Dendritic cell treated with granulocyte-macrophage colony-stimulating factor and Interleukin-4, amounts not matched to agents 40 ng/mL and 50 ng/mL, for 4 days (primary cell): ENCODE measurements at regions of chr2 and their contacts with region 1.

Region 1: GRCh38 chr2:231557571-231558237 is 27.5 kb upstream of the NMUR1 start:
- H3K4me3 Mint-ChIP-seq: no peak overlapping the region
- H3K27ac Mint-ChIP-seq: no peak overlapping the region
- H3K4me1 Mint-ChIP-seq: peaks cover 34% of the 10 kb centered on the region
- H3K27me3 Mint-ChIP-seq: peaks cover 53% of the 10 kb centered on the region

Region 2: DNA sequence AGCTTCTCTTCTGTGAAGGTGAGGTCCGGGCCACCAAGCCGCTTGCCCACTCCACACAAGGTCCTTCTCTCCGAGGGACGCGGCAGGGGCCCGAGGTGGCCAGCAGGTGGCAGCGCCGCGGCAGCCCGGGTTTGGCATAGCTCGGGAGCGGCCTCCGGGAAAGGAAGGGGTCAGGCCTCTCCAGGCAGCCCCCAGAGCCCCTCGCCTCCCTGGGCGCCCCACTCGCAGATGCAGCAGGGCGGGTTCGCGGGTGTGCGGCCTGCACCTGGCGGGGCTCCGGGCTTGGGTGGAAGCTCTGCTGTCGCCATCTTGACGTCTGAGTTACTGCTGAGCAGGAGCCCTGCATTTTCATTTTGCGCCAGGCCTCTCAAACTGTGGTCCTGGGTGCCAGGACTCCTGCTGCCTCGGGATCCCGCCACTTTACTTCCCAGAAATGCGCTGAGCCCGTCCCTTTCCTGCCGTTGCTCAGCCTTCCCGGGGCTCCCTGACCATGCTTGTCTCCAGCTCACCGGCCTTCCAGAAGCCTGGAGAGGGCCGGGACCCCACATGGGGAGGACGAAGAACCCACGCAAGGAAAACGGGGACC is 74.8 kb before region 1 on chr2:
- intact Hi-C with region 1: loop called (anchors 1 kb)
- H3K4me3 Mint-ChIP-seq: peak overlapping the region; percentile 86
- H3K27ac Mint-ChIP-seq: peak overlapping the region; percentile 82
- H3K4me1 Mint-ChIP-seq: peaks cover 22% of the 10 kb centered on the region
- H3K27me3 Mint-ChIP-seq: peaks cover 9% of the 10 kb centered on the region

Region 3: GRCh38 chr2:231514103-231514950 is 43.4 kb before region 1 on chr2:
- intact Hi-C with region 1: loop called (anchors 1 kb)
- H3K4me3 Mint-ChIP-seq: peak overlapping the region; percentile 92
- H3K27ac Mint-ChIP-seq: peak overlapping the region; percentile 88
- H3K4me1 Mint-ChIP-seq: peaks cover 12% of the 10 kb centered on the region
- H3K27me3 Mint-ChIP-seq: peaks cover 11% of the 10 kb centered on the region

Region 4: GRCh38 chr2:231530091-231531011 is 27.4 kb before region 1 on chr2 and contains the start of gene NMUR1:
- intact Hi-C with region 1: loop called (anchors 1 kb)
- H3K4me3 Mint-ChIP-seq: peak within 1 kb of the TSS; percentile 32
- H3K27ac Mint-ChIP-seq: no peak within 1 kb of the TSS
- H3K4me1 Mint-ChIP-seq: peaks cover 10% of the 10 kb centered on the region
- H3K27me3 Mint-ChIP-seq: peaks cover 98% of the 10 kb centered on the region